Caco-2 (cell line): ENCODE measurements at regions of chr19 and their contacts with region 1.

Region 1: GRCh38 chr19:33316541-33317264 is 14.4 kb upstream of the CEBPA start:
- DNase-seq: peak; percentile 78 to 88
- H3K4me3 ChIP-seq: no peak overlapping the region
- H3K4me3 Mint-ChIP-seq: peak overlapping the region; percentile 64
- H3K27ac Mint-ChIP-seq: peak overlapping the region; percentile 93
- H3K4me1 ChIP-seq: peaks cover 30% of the 10 kb centered on the region
- H3K4me1 Mint-ChIP-seq: peaks cover 26% of the 10 kb centered on the region
- H3K27me3 ChIP-seq: no peaks in the 10 kb centered on the region
- H3K27me3 Mint-ChIP-seq: no peaks in the 10 kb centered on the region
- CTCF ChIP-seq: no peak

Region 2: DNA sequence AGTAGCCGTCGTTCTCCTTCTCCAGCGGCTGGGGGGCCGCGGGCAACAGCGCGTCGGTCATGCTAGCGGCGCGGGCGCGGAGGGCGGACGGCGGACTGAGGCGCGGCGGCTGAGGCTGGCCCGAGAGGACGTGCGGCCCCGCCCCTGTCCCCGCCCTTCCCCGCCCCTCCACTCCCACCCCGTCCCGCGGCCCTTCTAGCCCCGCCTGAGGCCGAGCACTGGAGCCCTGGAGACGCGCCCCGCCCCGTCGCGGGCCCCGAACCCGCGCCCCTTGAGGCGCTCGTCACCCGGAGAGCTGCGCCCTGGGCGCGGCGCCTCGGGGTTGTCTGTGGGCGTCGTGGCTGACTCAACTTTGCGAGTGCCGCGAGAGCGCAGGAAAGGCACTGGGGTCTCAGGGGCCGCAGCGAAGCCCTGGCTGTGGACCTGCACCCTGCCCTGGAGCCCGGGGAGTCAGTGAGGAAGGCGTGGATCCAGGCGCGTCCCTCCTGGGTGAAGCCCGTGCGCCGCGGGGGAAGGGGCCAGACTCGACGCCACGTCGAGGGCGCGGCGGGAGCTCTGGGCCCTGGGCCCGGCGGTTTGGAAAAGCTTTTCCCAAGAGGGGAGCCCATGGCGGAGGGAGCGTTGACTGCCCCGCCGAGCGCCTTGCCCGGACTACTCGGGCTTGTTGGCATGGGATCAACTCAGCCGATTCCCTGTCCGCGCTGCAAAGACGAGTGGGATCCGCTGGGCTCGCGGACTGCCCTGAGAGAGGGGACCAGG is 251.7 kb before region 1 on chr19 and contains the start of gene RHPN2:
- CTCF ChIA-PET with region 1: no interaction called
- POLR2A ChIA-PET with region 1: no interaction called
- intact Hi-C with region 1: no loop called
- DNase-seq: peak; percentile 85 to 87
- H3K4me3 ChIP-seq: peak within 1 kb of the TSS; percentile 98
- H3K4me3 Mint-ChIP-seq: peak within 1 kb of the TSS; percentile 92
- H3K27ac Mint-ChIP-seq: peak within 1 kb of the TSS; percentile 90
- H3K4me1 ChIP-seq: peaks cover 42% of the 10 kb centered on the region
- H3K4me1 Mint-ChIP-seq: peaks cover 18% of the 10 kb centered on the region
- H3K27me3 ChIP-seq: no peaks in the 10 kb centered on the region
- H3K27me3 Mint-ChIP-seq: no peaks in the 10 kb centered on the region
- CTCF ChIP-seq: no peak
- total RNA-seq, gene RHPN2: 69.5 and 78.5 TPM in 2 replicates

Region 3: GRCh38 chr19:33245948-33246708 is 70.6 kb before region 1 on chr19:
- CTCF ChIA-PET with region 1: no interaction called
- POLR2A ChIA-PET with region 1: no interaction called
- intact Hi-C with region 1: no loop called
- DNase-seq: peak in 1 of 2 experiments; percentile 40
- H3K4me3 ChIP-seq: no peak overlapping the region
- H3K4me3 Mint-ChIP-seq: no peak overlapping the region
- H3K27ac Mint-ChIP-seq: no peak overlapping the region
- H3K4me1 ChIP-seq: peaks cover 29% of the 10 kb centered on the region; the same call in 1 of the 2 replicates
- H3K4me1 Mint-ChIP-seq: peaks cover 6% of the 10 kb centered on the region
- H3K27me3 ChIP-seq: no peaks in the 10 kb centered on the region
- H3K27me3 Mint-ChIP-seq: no peaks in the 10 kb centered on the region
- CTCF ChIP-seq: peak; percentile 43 to 69

Region 4: GRCh38 chr19:33292595-33293441 is 23.9 kb before region 1 on chr19:
- CTCF ChIA-PET with region 1: interaction called, 3 read pairs
- POLR2A ChIA-PET with region 1: no interaction called
- intact Hi-C with region 1: loop called (anchors 2 kb)
- DNase-seq: no peak
- H3K4me3 ChIP-seq: no peak overlapping the region
- H3K4me3 Mint-ChIP-seq: peak overlapping the region; percentile 69
- H3K27ac Mint-ChIP-seq: peak overlapping the region; percentile 97
- H3K4me1 ChIP-seq: peaks cover 62% of the 10 kb centered on the region
- H3K4me1 Mint-ChIP-seq: peaks cover 41% of the 10 kb centered on the region
- H3K27me3 ChIP-seq: no peaks in the 10 kb centered on the region
- H3K27me3 Mint-ChIP-seq: no peaks in the 10 kb centered on the region
- CTCF ChIP-seq: no peak

Region 5: DNA sequence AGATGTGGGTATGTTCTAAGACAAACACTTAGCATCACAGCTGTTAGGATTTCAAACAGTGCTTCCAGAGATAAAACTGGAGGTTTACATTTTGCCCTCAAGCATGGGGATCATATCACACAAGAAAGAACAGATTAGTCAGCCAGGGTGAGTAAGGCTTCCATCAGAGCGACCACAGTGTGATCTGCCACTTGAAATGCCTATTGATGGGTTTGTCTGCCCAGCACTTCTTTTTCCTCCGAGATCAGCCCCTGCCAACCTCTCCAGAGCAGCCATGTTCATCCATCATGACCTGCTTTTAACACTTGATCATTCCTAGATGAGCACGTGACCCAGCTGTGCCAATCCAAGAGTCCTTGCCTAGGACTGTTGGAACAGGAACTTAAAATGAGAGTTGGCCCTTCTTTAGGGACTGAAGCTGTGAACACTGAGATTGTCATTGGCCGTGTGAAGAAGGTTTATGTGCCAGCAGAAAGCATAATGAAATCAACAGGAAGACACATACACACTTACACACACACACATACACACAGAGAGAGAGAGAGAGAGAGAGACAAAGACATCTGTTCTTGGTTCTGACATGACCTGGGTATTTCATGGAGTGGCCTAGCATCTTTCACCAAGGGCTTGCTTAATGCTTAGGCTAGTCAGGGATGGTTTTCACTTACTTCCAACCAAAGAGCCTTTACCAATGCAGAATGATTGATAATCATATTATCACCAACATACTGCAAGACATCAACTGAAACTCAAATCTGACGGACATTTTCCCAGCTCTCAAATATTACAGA is 51.6 kb after region 1 on chr19:
- CTCF ChIA-PET with region 1: interaction called, 13 read pairs
- POLR2A ChIA-PET with region 1: interaction called, 20 read pairs
- intact Hi-C with region 1: loop called (anchors 1 kb)
- DNase-seq: no peak
- H3K4me3 ChIP-seq: no peak overlapping the region
- H3K4me3 Mint-ChIP-seq: no peak overlapping the region
- H3K27ac Mint-ChIP-seq: peak overlapping the region; percentile 73
- H3K4me1 ChIP-seq: peaks cover 48% of the 10 kb centered on the region
- H3K4me1 Mint-ChIP-seq: peaks cover 49% of the 10 kb centered on the region
- H3K27me3 ChIP-seq: no peaks in the 10 kb centered on the region
- H3K27me3 Mint-ChIP-seq: no peaks in the 10 kb centered on the region
- CTCF ChIP-seq: no peak

Region 6: DNA sequence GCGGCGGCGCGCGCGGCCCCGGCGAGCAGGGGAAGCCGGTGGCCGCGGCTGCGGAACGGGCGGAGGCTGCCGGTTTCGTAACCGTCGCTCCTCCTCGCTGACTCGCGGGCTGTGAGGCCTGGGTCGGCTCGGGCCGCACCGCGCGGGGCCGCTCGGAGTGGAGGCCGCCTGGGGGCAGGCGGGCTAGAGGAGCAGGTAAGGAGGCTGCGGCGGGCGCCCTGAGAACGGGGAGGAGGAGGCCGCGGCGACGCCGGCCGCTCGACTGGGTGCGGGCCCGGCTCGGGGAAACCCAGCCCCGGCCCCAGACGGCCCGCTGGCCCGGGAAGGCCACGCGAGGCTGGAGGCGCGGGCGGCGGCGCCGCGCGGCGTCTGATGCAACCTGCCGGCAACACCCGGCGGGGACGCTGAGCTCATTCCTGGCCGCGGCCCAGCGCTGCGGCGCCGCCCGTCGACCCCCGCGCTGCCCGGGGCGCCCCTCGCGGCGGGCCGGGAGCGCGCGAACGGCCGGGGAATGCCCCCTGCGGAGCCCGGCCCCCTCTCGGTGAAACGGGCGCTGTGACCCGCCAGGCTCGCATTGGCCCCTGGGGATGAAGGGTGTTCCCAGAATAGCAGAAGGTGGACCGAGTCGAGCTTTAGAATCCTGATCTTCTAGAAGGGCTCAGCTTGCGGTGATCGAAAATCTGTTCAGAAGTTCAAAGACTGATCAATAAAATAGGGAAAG is 57.2 kb after region 1 on chr19 and contains the start of gene CEBPG:
- CTCF ChIA-PET with region 1: interaction called, 13 read pairs
- POLR2A ChIA-PET with region 1: interaction called, 20 read pairs
- intact Hi-C with region 1: no loop called
- DNase-seq: peak; percentile 66 to 90
- H3K4me3 ChIP-seq: peak within 1 kb of the TSS; percentile 65
- H3K4me3 Mint-ChIP-seq: peak within 1 kb of the TSS; percentile 93
- H3K27ac Mint-ChIP-seq: peak within 1 kb of the TSS; percentile 95
- H3K4me1 ChIP-seq: peaks cover 28% of the 10 kb centered on the region
- H3K4me1 Mint-ChIP-seq: peaks cover 26% of the 10 kb centered on the region
- H3K27me3 ChIP-seq: no peaks in the 10 kb centered on the region
- H3K27me3 Mint-ChIP-seq: no peaks in the 10 kb centered on the region
- CTCF ChIP-seq: peak; percentile 22 to 62
- total RNA-seq, gene CEBPG: 74.9 and 79.4 TPM in 2 replicates

Region 7: GRCh38 chr19:33430674-33431277 is 114.1 kb after region 1 on chr19:
- CTCF ChIA-PET with region 1: no interaction called
- POLR2A ChIA-PET with region 1: no interaction called
- intact Hi-C with region 1: no loop called
- DNase-seq: peak; percentile 72 to 82
- H3K4me3 ChIP-seq: no peak overlapping the region
- H3K4me3 Mint-ChIP-seq: no peak overlapping the region
- H3K27ac Mint-ChIP-seq: no peak overlapping the region
- H3K4me1 ChIP-seq: no peaks in the 10 kb centered on the region
- H3K4me1 Mint-ChIP-seq: no peaks in the 10 kb centered on the region
- H3K27me3 ChIP-seq: no peaks in the 10 kb centered on the region
- H3K27me3 Mint-ChIP-seq: no peaks in the 10 kb centered on the region
- CTCF ChIP-seq: peak; percentile 80 to 96